ENCODE measurements at regions of chrX and their contacts with region 1.

Region 1: DNA sequence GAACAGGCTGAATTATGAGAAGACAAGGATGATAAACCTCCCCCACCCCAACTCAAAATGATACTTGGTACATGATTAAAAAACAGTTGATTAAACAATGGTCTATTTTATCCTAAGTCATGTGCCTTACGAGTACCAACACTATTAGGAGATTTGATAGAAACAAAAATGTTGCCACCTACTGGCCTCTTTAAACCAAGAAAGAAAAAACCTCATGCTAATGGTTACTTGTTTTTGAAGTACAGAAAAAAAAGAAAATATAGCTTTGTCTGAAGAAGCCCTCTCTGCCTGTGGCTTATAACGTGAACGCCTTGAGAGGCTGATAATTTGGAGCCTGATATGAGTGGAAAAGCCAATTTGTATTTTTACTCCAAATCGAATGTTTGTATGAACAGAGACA is 538.2 kb downstream of the DMD start:
- DNase-seq: peak; percentile 3
- ATAC-seq: no peak
- H3K4me3 ChIP-seq: no peak overlapping the region
- H3K4me3 Mint-ChIP-seq: no peak overlapping the region
- H3K27ac ChIP-seq: no peak overlapping the region
- H3K27ac Mint-ChIP-seq: no peak overlapping the region
- H3K4me1 ChIP-seq: no peaks in the 10 kb centered on the region
- H3K4me1 Mint-ChIP-seq: no peaks in the 10 kb centered on the region
- H3K27me3 ChIP-seq: no peaks in the 10 kb centered on the region
- H3K27me3 Mint-ChIP-seq: no peaks in the 10 kb centered on the region
- CTCF ChIP-seq: no peak

Region 2: DNA sequence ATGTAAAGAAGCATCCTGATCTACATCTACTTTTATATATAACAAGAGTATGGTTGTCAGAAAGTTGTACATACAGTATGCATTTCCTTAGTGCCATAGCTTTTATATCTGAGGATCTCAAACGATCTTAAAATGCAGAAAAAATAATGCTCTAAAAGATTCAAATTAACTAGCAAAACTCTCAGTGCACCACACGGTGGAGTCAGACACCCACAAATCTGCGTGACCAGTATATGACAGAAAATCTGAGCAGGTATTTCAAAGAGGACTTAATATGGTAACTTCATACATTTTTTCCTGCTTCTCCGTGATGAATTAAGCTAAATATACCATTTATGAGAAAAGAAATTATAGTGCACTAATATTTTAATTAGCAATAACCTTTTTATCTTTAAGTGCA is 264.8 kb before region 1 on chrX:
- CTCF ChIA-PET with region 1: interaction called, 3 read pairs
- POLR2A ChIA-PET with region 1: no interaction called
- intact Hi-C with region 1: loop called (anchors 2 kb)
- DNase-seq: peak; percentile 51
- ATAC-seq: no peak
- H3K4me3 ChIP-seq: no peak overlapping the region
- H3K4me3 Mint-ChIP-seq: no peak overlapping the region
- H3K27ac ChIP-seq: no peak overlapping the region
- H3K27ac Mint-ChIP-seq: no peak overlapping the region
- H3K4me1 ChIP-seq: no peaks in the 10 kb centered on the region
- H3K4me1 Mint-ChIP-seq: peaks cover 5% of the 10 kb centered on the region
- H3K27me3 ChIP-seq: no peaks in the 10 kb centered on the region
- H3K27me3 Mint-ChIP-seq: no peaks in the 10 kb centered on the region
- CTCF ChIP-seq: peak; percentile 71

Region 3: DNA sequence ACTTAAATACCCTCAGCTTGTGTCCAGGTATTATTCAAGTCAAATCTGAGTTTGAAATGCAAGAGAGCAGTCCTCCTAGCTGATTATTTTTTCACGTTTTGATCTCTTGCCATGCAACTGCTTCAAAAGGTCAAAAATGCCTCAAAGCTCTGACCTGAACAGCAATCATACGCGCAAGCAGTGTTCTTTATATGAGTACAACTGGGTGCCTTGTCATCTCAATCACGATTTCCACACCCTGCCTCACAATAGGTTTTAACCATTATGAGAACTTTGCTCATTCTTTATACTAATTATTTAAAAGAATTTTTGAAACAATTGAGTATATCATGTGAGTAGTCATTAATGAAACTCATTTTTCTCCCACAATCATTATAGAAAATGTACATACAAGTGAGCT is 110.9 kb before region 1 on chrX:
- CTCF ChIA-PET with region 1: no interaction called
- POLR2A ChIA-PET with region 1: no interaction called
- intact Hi-C with region 1: no loop called
- DNase-seq: no peak
- ATAC-seq: no peak
- H3K4me3 ChIP-seq: no peak overlapping the region
- H3K4me3 Mint-ChIP-seq: no peak overlapping the region
- H3K27ac ChIP-seq: no peak overlapping the region
- H3K27ac Mint-ChIP-seq: no peak overlapping the region
- H3K4me1 ChIP-seq: no peaks in the 10 kb centered on the region
- H3K4me1 Mint-ChIP-seq: no peaks in the 10 kb centered on the region
- H3K27me3 ChIP-seq: no peaks in the 10 kb centered on the region
- H3K27me3 Mint-ChIP-seq: no peaks in the 10 kb centered on the region
- CTCF ChIP-seq: no peak

Measured in B cell (primary cell).